ENCODE measurements at regions of chr5 and their contacts with region 1.

Region 1: GRCh38 chr5:75511435-75512384 is at the starts of genes CERT1 and POLK:
- DNase-seq: peak; percentile 96 to 100 (median 99)

Region 2: GRCh38 chr5:75236322-75237316 is 275.1 kb before region 1 on chr5 and contains the start of gene ANKRD31:
- intact Hi-C with region 1: no loop called
- DNase-seq: peak; percentile 67 to 93 (median 86)

Region 3: GRCh38 chr5:75336625-75337339 is 174.9 kb before region 1 on chr5 and contains the start of gene HMGCR:
- intact Hi-C with region 1: loop called (anchors 2 kb)
- DNase-seq: peak; percentile 98 to 100 (median 99)

Region 4: DNA sequence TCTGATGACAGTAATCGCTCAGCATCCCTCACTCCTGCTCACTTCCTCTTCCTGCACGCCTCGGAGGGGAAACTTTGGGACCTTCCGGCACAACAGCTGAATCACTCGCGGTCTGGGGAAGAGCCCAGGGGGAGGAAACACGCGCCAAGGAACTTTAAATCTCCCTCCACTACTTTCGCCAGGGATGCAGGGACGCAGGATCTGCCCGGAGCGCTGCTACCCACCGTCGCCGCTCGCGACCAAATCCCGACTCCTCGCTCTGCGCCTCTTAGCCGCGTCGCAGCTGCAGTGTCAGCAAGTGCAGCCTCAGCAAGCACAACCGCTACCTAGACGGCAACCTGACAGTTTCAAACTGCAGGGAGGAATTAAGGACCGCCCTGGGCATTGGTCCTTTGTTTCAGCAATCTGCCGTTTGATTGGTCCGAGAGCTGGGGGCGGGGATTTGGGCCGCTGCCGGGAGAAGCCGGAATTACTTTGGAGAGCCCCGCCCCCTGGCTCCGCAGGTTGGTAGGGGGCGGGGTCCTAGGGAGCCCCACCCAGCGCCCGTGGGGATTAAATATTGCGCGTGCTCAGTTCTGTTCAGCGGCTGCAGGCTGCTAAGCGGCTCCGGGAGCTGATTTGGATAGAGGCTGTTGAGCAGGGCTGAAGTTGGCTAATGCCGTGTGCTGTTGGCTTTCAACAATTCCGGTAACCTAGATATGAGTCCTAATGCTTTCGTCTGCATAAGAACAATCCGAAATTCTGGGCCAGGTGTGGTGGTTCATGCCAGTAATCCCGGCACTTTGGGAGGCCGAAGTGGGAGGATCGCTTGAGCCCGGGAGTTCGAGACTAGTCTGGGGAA is 205.6 kb after region 1 on chr5 and contains the start of gene POC5:
- intact Hi-C with region 1: loop called (anchors 5 kb)
- DNase-seq: peak; percentile 93 to 98 (median 96)